OCI-LY7 (cell line): ENCODE measurements at regions of chr17 and their contacts with region 1.

Region 1: GRCh38 chr17:78497115-78497540 is 80.1 kb downstream of the DNAH17 start:
- DNase-seq: peak; percentile 77
- H3K4me3 ChIP-seq: no peak overlapping the region
- H3K27ac ChIP-seq: no peak overlapping the region
- H3K4me1 ChIP-seq: no peaks in the 10 kb centered on the region
- CTCF ChIP-seq: peak; percentile 91

Region 2: DNA sequence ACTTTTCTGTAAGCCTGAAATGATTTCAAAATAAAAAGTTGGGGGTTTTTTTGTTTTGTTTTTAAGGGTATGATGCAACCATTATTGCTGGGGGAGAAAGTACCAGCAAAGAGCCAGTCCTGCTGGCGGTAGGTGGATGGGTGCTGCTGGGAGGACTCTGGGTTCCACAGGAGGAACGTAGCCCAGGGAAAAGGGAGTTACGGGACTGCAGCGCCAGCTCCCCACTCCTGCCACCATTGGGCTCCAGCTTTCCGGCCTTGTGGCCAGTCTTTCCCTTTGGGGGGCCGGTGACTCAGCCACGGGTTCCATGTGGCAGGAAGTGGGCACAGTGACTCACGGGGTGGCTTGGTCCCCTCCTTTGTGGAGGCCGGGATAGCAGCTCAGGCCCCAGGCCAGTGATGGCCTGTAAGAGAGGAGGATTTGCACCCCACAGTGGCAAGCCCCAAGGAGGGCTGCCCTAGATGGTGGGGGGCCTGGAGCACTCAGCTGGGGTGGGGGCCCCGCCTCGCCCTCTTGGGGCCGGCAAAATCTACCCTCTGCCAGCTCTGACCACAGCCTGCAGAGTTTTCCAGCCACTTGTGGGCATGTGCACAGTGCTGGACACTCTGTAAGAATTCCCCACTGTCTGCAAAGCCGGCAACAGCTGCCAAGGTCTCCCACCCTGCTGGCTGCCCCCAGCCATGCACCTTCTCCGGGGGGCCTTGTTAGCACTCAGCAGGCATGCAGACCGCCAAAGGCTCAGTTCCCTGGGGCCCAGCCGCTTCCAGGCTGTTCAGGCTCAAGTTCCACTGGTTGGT is 167.7 kb before region 1 on chr17:
- CTCF ChIA-PET with region 1: no interaction called
- POLR2A ChIA-PET with region 1: no interaction called
- intact Hi-C with region 1: no loop called
- DNase-seq: no peak
- H3K4me3 ChIP-seq: no peak overlapping the region
- H3K27ac ChIP-seq: no peak overlapping the region
- H3K4me1 ChIP-seq: no peaks in the 10 kb centered on the region
- CTCF ChIP-seq: no peak

Region 3: GRCh38 chr17:78517421-78517820 is 20.3 kb after region 1 on chr17:
- CTCF ChIA-PET with region 1: no interaction called
- POLR2A ChIA-PET with region 1: no interaction called
- intact Hi-C with region 1: no loop called
- DNase-seq: no peak
- H3K4me3 ChIP-seq: no peak overlapping the region
- H3K27ac ChIP-seq: no peak overlapping the region
- H3K4me1 ChIP-seq: no peaks in the 10 kb centered on the region
- CTCF ChIP-seq: no peak

Region 4: GRCh38 chr17:78573956-78574355 is 76.8 kb after region 1 on chr17:
- CTCF ChIA-PET with region 1: no interaction called
- POLR2A ChIA-PET with region 1: no interaction called
- intact Hi-C with region 1: loop called (anchors 5 kb)
- DNase-seq: peak; percentile 60
- H3K4me3 ChIP-seq: no peak overlapping the region
- H3K27ac ChIP-seq: no peak overlapping the region
- H3K4me1 ChIP-seq: peaks cover 15% of the 10 kb centered on the region
- CTCF ChIP-seq: peak; percentile 66

Region 5: GRCh38 chr17:78641243-78641642 is 144.1 kb after region 1 on chr17:
- CTCF ChIA-PET with region 1: no interaction called
- POLR2A ChIA-PET with region 1: no interaction called
- intact Hi-C with region 1: no loop called
- DNase-seq: no peak
- H3K4me3 ChIP-seq: no peak overlapping the region
- H3K27ac ChIP-seq: no peak overlapping the region
- H3K4me1 ChIP-seq: peaks cover 17% of the 10 kb centered on the region
- CTCF ChIP-seq: no peak

Region 6: GRCh38 chr17:78708510-78708973 is 211.4 kb after region 1 on chr17:
- CTCF ChIA-PET with region 1: no interaction called
- POLR2A ChIA-PET with region 1: no interaction called
- intact Hi-C with region 1: loop called (anchors 1 kb)
- DNase-seq: peak; percentile 90
- H3K4me3 ChIP-seq: peak overlapping the region; percentile 41
- H3K27ac ChIP-seq: peak overlapping the region; percentile 90
- H3K4me1 ChIP-seq: peaks cover 84% of the 10 kb centered on the region
- CTCF ChIP-seq: peak; percentile 100

Region 7: GRCh38 chr17:78745407-78746088 is 248.4 kb after region 1 on chr17:
- CTCF ChIA-PET with region 1: no interaction called
- POLR2A ChIA-PET with region 1: no interaction called
- intact Hi-C with region 1: loop called (anchors 5 kb)
- DNase-seq: peak; percentile 70
- H3K4me3 ChIP-seq: no peak overlapping the region
- H3K27ac ChIP-seq: no peak overlapping the region
- H3K4me1 ChIP-seq: peaks cover 100% of the 10 kb centered on the region
- CTCF ChIP-seq: peak; percentile 92

Region 8: DNA sequence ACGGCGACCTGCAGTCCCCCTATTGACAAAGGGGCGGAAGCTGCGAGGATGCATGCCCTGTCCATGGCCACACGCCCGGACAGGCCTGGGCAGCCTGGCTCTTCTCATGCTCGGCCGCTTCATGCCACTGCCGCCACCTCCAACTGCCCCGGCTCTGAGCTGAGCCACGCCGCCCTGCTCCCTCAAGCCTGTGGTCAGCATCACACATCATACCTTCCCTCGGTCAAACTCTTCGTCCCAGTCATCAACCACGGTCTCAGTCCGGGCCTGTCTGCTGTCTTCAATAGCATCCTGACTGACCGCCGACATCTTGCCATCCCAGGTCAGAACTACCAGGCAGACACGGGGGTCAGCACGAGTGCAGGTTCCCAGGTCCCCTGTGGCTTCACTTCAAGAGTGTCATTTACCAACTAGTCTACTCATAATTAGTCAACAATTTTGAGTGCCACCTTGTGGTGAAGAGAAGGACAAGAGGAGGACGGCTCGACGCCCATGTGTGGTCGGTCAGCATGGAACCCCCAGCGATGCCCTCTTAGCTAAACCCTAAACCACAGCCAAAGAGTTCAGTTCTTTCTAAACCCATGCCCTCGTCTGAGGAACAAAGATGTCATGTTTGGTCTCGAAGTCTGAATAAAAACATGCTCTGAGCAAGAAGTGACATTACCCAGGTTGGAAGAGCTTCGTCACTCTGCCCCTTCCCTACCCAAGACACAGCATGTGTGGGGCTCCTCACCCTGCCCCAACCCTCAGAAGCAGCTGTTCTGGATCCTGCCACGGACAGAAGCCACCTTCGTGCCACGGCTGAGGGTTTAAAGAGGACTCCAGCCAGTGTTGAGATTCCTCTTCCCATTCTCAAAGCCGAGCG is 301.8 kb after region 1 on chr17:
- CTCF ChIA-PET with region 1: no interaction called
- POLR2A ChIA-PET with region 1: no interaction called
- intact Hi-C with region 1: loop called (anchors 1 kb)
- DNase-seq: peak; percentile 71
- H3K4me3 ChIP-seq: no peak overlapping the region
- H3K27ac ChIP-seq: no peak overlapping the region
- H3K4me1 ChIP-seq: no peaks in the 10 kb centered on the region
- CTCF ChIP-seq: peak; percentile 79

Region 9: DNA sequence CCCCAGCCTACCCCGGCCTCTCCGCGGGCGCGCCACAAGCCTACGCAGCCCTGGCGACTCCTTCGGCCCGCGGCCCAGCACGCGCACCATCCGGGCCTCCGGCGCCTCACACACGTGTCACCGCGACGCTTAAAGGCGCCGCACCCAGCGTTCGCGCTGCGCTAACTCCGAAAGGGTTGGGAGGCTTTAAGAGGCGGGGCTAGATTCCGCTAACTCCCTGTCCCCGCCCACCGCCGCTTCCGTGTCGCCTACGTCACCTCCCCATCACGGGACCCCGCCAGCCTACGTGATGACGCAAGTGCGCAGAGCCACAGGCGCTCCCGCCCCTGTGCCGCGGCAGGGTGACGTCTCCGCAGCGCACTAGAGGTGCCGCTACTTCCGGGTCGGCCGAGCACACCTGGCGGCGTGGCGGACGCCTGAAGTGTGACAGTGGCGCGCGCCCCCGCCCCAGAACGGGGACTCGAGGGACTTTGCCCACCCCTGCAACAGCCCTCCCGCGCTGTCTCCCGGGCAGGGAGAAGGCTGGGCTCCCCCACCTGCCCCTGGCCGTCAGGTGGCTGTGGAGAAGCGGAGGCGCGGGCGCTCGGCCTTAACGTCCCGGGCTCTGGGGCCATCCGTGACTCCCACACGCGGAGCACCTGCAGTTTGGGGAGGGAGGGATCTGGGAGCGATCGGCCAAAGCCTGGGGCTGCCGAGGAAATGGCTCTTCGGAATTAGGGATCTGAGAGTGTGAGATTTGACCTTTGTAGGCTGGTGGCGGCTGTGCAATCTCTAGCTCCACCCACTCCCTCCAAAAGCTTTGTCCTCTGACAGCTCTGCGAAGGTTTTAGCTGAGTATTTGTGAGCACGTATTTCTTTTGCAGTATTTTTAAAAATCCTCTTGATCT is 343.8 kb after region 1 on chr17 and contains the start of gene USP36:
- CTCF ChIA-PET with region 1: no interaction called
- POLR2A ChIA-PET with region 1: no interaction called
- intact Hi-C with region 1: loop called (anchors 5 kb)
- DNase-seq: peak; percentile 100
- H3K4me3 ChIP-seq: peak within 1 kb of the TSS; percentile 84
- H3K27ac ChIP-seq: peak within 1 kb of the TSS; percentile 70
- H3K4me1 ChIP-seq: peaks cover 28% of the 10 kb centered on the region
- CTCF ChIP-seq: peak; percentile 24; the same call in 1 of the 2 replicates
- total RNA-seq, gene USP36: 46.6 and 47.2 TPM in 2 replicates

Region 10: DNA sequence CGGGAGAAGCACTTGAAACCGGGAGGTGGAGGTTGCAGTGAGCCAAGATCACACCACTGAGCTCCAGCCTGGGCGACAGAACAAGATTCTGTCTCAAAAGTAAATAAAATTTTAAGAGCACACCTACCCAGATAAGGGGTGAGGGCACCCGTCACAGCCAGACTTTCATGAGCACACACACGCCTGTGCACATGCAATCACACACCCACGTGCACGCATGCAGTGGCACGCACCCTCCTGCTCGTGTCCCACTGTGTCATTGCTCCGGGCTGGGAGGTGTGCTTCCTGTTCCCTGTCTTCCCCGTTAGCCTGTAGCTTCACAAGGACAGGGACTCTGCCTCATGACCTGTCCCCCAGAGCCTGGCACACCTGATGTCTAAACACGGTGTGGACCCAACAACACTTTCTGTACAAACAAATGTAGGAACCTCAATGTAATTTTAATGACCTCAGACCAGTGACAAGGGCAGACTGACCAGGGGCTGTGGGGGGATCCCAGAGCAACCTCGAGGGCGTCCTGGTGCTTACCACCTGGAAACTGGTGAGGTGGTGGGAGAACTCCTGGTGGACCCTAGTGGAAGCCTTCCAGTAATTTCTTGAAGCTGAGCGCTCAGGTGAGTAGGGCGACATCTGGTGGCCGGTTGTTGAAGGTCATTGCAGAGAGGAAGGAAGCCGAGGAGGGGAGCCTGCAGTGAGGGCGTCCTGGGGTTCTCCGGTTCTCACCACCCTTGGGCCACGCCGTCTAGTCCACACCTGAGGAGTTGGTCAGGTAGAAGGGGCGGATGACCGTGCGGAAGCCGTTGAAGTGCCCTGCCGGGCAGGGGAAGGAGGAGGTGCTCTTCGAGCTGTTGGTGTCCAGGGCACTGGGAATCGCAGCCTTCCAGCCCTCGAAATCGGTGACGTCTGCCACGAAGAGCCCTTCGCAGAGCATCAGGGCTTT is 474.0 kb after region 1 on chr17:
- CTCF ChIA-PET with region 1: no interaction called
- POLR2A ChIA-PET with region 1: no interaction called
- intact Hi-C with region 1: loop called (anchors 1 kb)
- DNase-seq: peak; percentile 85
- H3K4me3 ChIP-seq: no peak overlapping the region
- H3K27ac ChIP-seq: no peak overlapping the region
- H3K4me1 ChIP-seq: peaks cover 8% of the 10 kb centered on the region
- CTCF ChIP-seq: peak; percentile 99